ENCODE measurements at regions of chr10 and their contacts with region 1.

Region 1: DNA sequence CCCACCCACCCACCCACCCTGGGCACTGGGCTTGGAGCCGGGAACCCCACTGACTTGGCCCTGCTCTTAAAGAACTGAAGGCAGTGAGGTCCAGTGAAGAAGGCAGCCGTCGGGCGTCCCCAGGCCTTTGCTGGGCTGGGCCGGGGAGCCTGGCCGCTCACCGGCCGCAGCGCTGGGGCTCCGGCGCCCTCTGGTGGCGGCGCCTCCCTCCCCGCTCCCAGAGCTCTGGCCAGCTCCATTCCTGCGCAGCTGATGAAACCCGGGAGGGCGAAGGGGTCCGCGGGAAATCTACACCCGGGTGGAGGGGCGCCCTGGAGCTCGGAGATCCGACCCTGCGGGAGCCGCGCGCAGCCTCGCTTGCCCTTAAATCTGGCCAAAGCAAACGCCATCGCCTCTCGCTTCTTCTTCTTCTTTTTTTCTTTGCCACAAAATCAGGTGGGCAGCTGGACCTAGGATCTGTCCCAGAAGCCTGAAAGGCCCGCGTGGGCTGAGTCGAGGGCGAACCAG is 1.7 kb upstream of the CXCL12 start:
- DNase-seq: peak; percentile 95
- H3K4me3 ChIP-seq: peak overlapping the region in 1 of 2 experiments; percentile 49; a peak in 1 of 4 replicates
- H3K27ac ChIP-seq: no peak overlapping the region
- H3K4me1 ChIP-seq: no peaks in the 10 kb centered on the region; a peak in 1 of 4 replicates
- H3K27me3 ChIP-seq: peaks cover 11% of the 10 kb centered on the region; the same call in 1 of the 2 replicates
- CTCF ChIP-seq: peak; percentile 79
- EP300 ChIP-seq: no peak
- RAD21 ChIP-seq: peak; percentile 91

Region 2: DNA sequence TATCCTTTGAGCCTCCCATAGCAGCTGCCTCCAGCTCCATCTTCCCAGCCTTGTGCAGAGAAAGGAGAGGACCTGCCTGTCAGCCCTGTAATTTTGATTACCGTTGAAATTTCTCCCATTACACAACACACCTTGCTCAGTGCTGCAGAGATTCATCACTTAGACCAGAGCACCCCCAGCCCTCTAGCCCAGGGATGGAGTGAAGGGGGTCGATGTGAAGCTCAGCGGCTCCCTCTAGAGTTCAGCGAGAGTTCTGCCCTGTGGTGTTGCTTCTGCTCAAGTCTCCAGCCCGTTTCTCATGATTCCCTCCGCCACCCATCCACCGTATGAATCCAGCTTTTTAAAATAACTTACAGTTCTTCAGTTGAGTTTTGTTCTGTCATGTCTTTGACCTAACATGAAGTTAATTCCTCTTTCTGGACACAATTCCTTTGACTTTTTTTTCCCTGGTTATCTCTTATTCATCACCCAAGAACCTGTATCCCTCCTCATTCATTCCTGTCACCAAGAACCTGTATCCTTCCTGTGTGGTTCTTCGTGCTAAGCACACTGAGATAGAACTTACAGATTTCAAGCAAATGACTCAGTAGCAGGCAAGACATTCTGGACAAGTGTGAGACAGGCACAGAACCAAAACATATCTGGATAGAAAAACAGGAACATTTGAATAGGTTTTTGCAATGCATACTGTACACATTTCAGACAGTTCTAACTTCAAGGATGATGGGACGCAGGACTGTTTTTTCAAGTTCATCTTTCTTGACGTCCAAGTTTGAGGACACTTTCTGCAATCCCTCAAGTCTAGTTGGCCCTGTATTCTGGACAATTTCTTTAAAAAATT is 702.9 kb before region 1 on chr10:
- CTCF ChIA-PET with region 1: interaction called, 117 read pairs
- POLR2A ChIA-PET with region 1: no interaction called
- DNase-seq: peak; percentile 58
- H3K4me3 ChIP-seq: no peak overlapping the region
- H3K27ac ChIP-seq: no peak overlapping the region
- H3K4me1 ChIP-seq: peaks cover 0 to 4% of the 10 kb centered on the region in 2 experiments; a peak in 1 of 4 replicates
- H3K27me3 ChIP-seq: no peaks in the 10 kb centered on the region
- CTCF ChIP-seq: peak; percentile 46
- EP300 ChIP-seq: no peak
- RAD21 ChIP-seq: 0 out of 2 replicates have a peak, but pooled peaks have one; percentile 26